AG04449 (cell line): ENCODE measurements at regions of chr17 and their contacts with region 1.

Region 1: DNA sequence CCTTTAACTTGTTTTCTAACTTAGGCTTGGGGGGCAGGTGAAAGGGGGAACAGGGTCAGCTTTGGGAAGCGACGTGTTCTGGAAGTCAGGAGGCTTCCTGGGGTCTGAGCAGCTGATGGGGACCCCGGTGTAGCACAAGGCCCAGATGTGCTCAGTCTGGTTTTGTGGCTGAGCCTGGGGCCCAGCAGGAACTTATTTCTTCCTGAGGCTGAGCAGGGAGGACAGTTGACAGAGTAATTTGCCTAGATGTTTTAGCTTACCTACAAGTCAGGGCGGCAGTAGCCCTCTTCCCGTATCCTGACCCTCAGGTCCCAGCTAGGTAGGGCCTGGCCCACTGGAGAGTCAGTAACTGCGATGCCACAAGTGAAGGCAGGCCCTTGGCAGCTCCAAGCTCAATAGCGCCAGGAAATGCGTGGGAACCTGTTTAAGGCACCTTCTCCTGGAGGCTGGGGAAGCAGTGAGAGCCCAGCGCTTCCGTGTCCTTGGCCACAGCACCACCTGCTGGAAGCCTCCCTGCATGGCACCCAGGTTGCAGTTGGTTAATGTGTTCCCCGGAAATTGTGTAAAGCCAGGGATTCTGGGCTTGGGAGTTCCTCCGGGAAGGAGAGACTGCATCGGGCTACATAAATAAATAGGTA is 5.2 kb downstream of the CCR7 start:
- DNase-seq: peak; percentile 77
- H3K4me3 ChIP-seq: no peak overlapping the region
- CTCF ChIP-seq: peak; percentile 97

Region 2: DNA sequence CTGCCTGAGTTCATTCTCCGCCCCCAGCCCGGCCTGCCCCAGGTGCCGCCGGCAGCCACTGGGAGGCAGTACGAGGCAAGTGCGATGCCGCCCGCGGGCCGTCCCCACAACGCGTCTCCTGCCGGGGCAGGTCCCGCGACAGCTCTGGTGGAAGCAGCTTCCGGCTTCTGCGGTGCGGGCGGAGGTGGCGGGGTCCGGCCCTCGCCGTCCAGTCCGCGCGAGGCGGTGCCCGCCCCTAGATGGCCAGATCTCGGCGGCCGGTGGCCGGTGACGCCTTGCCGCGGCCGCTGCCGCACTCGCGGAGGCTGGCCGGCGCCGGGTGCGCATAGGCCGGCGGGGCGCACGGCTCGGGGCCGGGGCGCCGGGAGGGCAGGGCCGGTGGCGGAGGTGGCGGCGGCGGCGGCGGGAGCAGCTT is 197.4 kb before region 1 on chr17:
- CTCF ChIA-PET with region 1: interaction called, 223 read pairs
- POLR2A ChIA-PET with region 1: no interaction called
- DNase-seq: no peak
- H3K4me3 ChIP-seq: peak overlapping the region; percentile 59
- CTCF ChIP-seq: peak; percentile 92

Region 3: GRCh38 chr17:40417609-40418427 is 142.3 kb before region 1 on chr17 and contains the start of gene TOP2A:
- CTCF ChIA-PET with region 1: interaction called, 21 read pairs
- POLR2A ChIA-PET with region 1: interaction called, 4 read pairs
- DNase-seq: peak; percentile 97
- H3K4me3 ChIP-seq: peak within 1 kb of the TSS; percentile 81
- CTCF ChIP-seq: no peak

Region 4: DNA sequence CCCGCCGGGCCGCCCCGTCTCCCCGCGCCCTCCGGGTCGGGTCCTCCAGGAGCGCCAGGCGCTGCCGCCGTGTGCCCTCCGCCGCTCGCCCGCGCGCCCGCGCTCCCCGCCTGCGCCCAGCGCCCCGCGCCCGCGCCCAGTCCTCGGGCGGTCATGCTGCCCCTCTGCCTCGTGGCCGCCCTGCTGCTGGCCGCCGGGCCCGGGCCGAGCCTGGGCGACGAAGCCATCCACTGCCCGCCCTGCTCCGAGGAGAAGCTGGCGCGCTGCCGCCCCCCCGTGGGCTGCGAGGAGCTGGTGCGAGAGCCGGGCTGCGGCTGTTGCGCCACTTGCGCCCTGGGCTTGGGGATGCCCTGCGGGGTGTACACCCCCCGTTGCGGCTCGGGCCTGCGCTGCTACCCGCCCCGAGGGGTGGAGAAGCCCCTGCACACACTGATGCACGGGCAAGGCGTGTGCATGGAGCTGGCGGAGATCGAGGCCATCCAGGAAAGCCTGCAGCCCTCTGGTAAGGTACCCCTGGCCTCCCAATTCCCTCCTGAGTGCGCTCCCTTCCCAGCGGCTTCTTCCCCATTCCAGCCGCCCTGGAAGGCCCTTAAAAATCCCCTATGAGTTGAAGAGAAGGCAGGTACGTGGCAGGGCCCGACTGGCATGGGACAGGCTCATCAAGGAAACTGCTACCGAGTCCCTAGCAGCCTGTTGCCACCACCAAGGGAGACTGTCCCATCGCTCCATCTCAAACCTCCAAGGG is 116.3 kb before region 1 on chr17:
- CTCF ChIA-PET with region 1: interaction called, 65 read pairs
- POLR2A ChIA-PET with region 1: interaction called, 9 read pairs
- DNase-seq: no peak
- H3K4me3 ChIP-seq: peak overlapping the region; percentile 99
- CTCF ChIP-seq: peak; percentile 84

Region 5: DNA sequence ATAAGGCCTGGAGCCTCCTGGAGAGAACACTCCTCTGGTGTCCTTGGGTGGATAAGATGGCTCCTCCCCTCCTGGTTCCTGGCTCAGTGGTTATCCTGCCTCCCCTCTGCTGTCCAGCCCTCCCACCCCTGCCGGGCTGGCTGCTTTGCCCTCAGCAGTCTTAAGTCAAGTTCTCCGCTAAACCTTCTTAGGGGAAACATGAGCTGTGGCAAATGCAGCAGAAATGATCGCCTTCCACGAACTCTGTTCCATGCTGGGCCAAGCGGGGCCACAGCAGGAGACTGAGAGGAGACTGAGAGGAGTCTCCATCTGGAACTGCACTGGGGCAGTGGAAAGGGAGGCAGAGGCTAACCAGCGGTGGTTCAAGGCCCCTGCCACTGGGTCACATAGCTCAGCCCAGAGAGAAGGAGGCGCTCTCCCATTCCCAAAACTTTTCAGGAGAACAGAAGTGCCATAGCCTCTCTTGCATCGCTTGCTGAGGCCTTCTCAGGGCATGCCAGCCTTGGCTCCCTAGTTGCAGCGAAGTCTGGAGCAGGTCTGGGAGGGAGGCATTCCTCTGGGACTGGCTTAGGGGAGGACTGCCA is 85.6 kb before region 1 on chr17:
- CTCF ChIA-PET with region 1: interaction called, 40 read pairs
- POLR2A ChIA-PET with region 1: interaction called, 3 read pairs
- DNase-seq: no peak
- H3K4me3 ChIP-seq: no peak overlapping the region
- CTCF ChIP-seq: no peak

Region 6: GRCh38 chr17:40542558-40543411 is 17.3 kb before region 1 on chr17:
- CTCF ChIA-PET with region 1: interaction called, 562 read pairs
- POLR2A ChIA-PET with region 1: no interaction called
- DNase-seq: peak; percentile 88
- H3K4me3 ChIP-seq: no peak overlapping the region
- CTCF ChIP-seq: no peak